Testis (tissue), 5 donors: ENCODE measurements at regions of chr12 and their contacts with region 1.

Region 1: DNA sequence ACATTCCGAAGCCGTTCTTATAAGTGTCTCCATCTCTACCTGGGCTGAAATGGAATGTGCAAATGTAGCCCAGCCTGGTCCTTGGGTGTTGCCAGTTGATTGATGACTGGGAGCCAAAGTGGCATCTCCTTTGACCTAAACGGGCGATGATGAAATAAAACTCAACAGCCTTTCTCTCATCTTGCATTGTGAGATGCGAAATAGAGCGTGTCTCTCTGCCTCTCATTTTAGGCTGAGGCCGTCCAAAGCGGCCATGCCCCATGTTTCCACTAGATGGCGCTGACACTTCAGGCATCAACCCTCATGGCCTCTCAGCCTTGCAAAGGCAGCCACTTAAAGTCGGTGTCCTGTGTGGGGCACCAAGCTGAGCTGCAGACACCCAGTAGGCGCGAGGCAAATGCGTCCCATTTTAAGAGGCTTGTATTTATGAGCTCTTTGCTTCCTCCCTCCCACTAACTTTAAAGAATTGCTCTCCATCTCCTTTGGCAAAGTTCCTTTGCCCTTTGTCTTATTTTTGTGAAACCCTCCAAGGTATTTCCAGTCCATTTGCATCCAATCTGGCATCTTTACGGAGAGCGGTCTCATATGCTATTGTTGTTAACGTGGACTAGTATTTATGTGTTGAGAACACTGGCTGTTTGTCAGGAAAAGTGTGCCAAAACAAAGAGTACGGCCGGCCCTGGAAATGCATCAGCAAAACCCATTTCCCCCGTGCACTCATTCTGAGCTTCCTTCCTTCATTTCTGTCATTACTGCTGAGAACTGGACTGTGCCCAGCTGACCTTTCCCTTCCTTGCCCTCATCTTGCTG is 25.0 kb downstream of the GPRC5A start:
- DNase-seq: peak; percentile 94
- H3K4me3 ChIP-seq: no peak overlapping the region
- H3K27ac ChIP-seq: peak overlapping the region in 1 of 2 donors; percentile 77
- H3K4me1 ChIP-seq: no peaks in the 10 kb centered on the region
- H3K27me3 ChIP-seq: no peaks in the 10 kb centered on the region
- CTCF ChIP-seq: peak; percentile 87 to 98 (median 96)
- POLR2A ChIP-seq: no peak

Region 2: GRCh38 chr12:12327802-12328201 is 588.5 kb before region 1 on chr12:
- intact Hi-C with region 1: no loop called
- DNase-seq: no peak
- H3K4me3 ChIP-seq: no peak overlapping the region
- H3K27ac ChIP-seq: no peak overlapping the region
- H3K4me1 ChIP-seq: no peaks in the 10 kb centered on the region
- H3K27me3 ChIP-seq: no peaks in the 10 kb centered on the region
- CTCF ChIP-seq: peak; percentile 26 to 51 (median 50)
- POLR2A ChIP-seq: no peak

Region 3: DNA sequence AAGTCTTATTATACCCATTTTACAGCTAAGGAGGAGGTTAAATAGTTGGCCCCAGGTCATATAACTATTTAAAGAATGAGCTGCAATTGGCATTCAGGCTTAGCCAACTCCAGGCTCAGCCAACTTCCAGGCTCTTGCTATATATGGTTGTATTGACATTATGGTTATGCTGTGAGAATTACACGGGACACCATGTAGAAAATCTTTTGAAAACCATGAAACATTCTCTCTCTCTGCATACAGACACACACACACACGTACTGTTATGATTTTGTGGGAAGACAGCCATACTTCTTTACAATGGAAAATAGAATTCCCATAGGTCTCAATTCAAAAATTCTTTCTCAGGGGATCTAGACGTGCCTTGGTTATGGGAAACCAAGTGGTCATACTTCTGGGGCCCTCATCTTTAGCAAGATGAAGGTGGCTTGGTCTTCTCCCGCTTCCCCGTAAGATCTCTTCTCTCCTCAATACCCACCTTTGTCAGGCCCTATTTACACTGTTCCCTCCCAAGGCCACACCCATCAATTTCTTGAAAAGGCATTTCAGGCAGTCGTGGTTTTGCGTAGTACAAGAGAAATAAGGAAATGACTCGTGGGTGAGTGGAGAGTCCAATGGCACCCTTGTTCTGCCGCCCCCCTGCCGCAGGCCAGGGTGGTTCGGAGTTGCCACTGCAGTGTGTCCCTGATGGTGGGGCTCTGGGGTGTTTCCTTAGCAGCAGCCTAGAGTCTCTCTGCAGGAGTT is 35.0 kb before region 1 on chr12:
- intact Hi-C with region 1: no loop called
- DNase-seq: no peak
- H3K4me3 ChIP-seq: no peak overlapping the region
- H3K27ac ChIP-seq: no peak overlapping the region
- H3K4me1 ChIP-seq: peaks cover 2% of the 10 kb centered on the region
- H3K27me3 ChIP-seq: no peaks in the 10 kb centered on the region
- CTCF ChIP-seq: no peak
- POLR2A ChIP-seq: no peak

Region 4: GRCh38 chr12:12983420-12984035 is 67.2 kb after region 1 on chr12:
- intact Hi-C with region 1: loop called (anchors 10 kb)
- DNase-seq: peak; percentile 28
- H3K4me3 ChIP-seq: no peak overlapping the region
- H3K27ac ChIP-seq: no peak overlapping the region
- H3K4me1 ChIP-seq: no peaks in the 10 kb centered on the region
- H3K27me3 ChIP-seq: no peaks in the 10 kb centered on the region
- CTCF ChIP-seq: peak; percentile 26 to 58 (median 38)
- POLR2A ChIP-seq: no peak

Region 5: DNA sequence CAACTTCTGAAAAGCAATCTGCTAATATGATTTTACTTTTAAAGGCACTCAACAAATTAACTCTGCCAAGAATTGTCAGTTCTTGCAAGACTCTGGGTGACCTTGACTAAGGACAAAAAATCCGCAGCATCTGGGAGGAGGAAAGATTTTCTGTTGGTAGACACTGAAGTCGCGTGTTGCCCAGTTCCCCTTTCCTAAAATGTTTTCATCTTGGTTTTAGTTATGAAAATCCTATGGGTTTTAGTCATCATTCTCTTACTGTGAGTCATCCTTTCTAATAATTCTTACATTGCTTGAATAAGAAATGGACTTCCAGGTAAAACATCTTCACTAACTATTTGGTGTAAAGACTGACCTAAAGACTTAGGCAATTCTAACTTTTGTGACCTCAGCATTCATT is 178.0 kb after region 1 on chr12:
- intact Hi-C with region 1: loop called (anchors 10 kb)
- DNase-seq: peak; percentile 42
- H3K4me3 ChIP-seq: no peak overlapping the region
- H3K27ac ChIP-seq: no peak overlapping the region
- H3K4me1 ChIP-seq: peaks cover 13% of the 10 kb centered on the region
- H3K27me3 ChIP-seq: no peaks in the 10 kb centered on the region
- CTCF ChIP-seq: no peak
- POLR2A ChIP-seq: no peak

Region 6: DNA sequence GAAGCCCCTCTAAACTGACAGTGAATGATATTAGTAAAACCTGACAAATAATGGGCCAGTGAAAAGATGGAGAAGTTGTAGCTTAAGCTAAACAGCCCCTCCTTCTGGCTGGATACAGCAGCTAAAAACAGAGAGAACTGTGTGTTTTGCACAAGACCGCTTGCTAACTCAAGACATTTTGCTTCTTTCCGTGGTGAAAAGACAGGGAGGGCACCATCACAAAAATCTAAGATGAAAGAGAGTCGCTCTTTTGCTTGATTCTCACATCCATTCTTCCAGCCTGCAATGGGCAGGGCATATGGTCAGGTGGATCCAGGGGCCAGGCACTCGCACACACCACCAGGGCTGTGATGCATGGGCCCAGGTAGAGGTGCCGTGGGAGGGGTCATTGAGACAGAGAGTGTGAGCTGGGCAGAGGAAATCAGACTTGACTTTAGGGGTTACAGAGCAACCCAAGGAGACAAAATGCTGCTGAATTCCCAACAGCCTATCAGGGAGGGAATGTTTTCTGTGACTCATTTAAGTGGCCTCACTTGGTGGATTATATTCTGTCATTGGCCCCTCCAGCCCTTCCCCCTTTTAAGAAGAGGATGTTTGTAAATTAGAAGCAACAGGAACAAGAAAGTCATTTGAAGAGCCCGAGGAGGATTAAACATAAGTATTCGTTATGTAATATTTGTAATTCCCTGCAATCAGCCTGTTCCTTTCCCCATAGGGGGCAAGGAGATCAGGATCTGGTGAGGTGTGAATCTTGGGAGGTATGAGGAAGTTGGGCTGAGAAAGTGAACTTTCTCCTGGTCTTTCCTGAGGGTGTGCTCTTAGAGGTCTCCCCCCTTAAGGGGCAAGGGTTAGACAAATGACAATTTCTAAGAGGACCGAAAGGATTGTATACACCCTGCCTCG is 292.4 kb after region 1 on chr12:
- intact Hi-C with region 1: loop called (anchors 10 kb)
- DNase-seq: peak; percentile 37
- H3K4me3 ChIP-seq: no peak overlapping the region
- H3K27ac ChIP-seq: no peak overlapping the region
- H3K4me1 ChIP-seq: peaks cover 7% of the 10 kb centered on the region
- H3K27me3 ChIP-seq: no peaks in the 10 kb centered on the region
- CTCF ChIP-seq: peak in 2 of 3 experiments; percentile 25 to 38
- POLR2A ChIP-seq: no peak